ENCODE measurements at regions of chr3 and their contacts with region 1.

Region 1: DNA sequence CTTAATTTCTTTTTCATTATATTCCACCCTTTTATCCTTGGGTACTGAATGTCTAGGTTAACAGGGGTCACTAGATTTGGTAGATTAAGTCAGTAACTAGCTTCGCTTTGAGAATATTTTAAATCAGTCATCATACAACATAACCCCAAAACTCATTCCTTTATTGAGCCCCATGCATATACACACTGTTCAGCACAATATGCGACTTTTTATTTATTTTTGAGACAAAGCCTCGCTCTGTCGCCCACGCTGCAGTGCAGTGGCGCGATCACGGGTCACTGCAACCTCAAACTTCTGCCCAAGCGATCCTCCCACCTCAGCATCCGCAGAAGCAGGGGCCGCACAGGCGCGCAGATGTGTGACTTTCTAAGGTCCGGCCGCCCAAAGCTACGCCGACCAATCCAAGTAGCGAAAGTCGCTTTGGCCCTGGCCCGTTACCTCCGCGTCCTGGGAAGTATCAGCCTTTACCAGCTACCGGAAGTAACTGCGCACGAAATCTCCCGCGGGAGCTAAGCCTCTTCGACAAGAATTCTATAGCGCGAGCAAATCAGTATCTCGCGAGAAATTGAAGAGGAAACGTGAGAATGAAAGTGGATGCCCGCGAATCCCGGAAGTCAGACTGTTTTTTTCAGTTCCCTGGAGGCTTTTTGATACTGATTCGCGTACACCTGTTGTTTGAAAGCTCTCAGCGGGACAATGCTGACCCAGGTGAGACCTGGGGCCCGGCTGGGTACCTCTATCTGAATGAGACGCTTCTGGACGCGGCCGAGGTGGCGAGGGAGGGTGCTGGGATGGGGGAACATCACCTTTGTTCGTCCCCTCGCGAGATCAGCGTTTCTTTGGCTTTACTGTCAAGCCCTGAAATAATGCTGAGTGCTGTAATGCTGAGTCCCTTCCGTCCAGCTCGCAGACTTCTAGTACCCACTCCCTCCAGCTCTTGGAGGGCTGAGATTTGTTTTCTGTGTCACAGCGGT is at the starts of genes DHFR2 and NSUN3:
- DNase-seq: peak; percentile 96
- H3K4me3 ChIP-seq: peak within 1 kb of the TSS; percentile 81 to 92
- H3K27ac ChIP-seq: peak within 1 kb of the TSS; percentile 97 to 98
- H3K4me1 ChIP-seq: peaks cover 20% of the 10 kb centered on the region
- H3K27me3 ChIP-seq: no peaks in the 10 kb centered on the region
- CTCF ChIP-seq: no peak
- POLR2A ChIP-seq: no peak
- total RNA-seq, gene DHFR2: 9.1 to 10.9 TPM
- total RNA-seq, gene NSUN3: 19.1 to 19.6 TPM

Region 2: DNA sequence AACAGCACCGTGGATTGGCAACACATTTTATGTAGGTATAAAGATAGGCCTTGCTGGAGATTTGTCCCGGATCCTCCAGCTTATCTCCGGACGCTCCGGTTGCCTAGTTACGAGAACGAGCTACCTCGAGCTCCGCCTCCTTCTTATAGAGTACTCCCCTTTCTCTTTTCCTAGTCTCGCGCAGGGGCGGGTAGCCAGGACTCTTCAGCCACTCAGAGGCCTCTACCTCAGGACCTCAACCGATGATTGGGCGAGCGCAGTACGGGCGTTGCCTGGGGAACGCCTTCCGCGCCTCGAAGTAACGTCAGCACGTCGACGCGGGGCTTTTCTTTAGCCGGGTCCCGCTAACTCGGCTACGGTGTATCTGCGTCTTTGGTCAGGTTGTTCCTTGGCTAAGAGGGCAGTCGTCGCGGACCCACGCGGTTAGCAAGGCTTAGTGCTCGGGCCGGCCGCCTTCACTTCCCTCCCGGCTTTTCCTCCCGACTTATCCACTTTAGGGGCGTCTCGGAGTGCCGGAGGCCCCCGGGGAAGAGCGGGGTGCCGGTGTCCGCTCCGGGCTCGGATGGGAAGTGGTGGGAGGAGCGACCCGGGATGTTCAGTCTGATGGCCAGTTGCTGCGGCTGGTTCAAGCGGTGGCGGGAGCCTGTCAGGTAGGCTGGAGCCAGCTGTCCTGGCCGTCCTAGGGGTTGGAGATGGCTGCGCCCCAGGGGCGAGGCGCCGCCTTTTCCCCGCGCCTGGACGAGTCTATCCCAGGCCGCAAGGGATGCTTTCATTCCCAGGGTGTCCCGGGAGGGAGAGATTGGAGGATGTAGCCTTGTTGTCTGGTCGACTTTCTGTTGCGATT is 82.7 kb before region 1 on chr3 and contains the start of gene ARL13B:
- intact Hi-C with region 1: loop called (anchors 5 kb)
- DNase-seq: peak; percentile 100
- H3K4me3 ChIP-seq: peak within 1 kb of the TSS; percentile 67 to 95
- H3K27ac ChIP-seq: peak within 1 kb of the TSS; percentile 92 to 94
- H3K4me1 ChIP-seq: peaks cover 7% of the 10 kb centered on the region
- H3K27me3 ChIP-seq: no peaks in the 10 kb centered on the region
- CTCF ChIP-seq: no peak
- POLR2A ChIP-seq: peak; percentile 68
- total RNA-seq, gene ARL13B: 14.9 to 15.4 TPM

Region 3: GRCh38 chr3:94137377-94137776 is 74.7 kb after region 1 on chr3:
- intact Hi-C with region 1: no loop called
- DNase-seq: no peak
- H3K4me3 ChIP-seq: no peak overlapping the region
- H3K27ac ChIP-seq: no peak overlapping the region
- H3K4me1 ChIP-seq: no peaks in the 10 kb centered on the region
- H3K27me3 ChIP-seq: no peaks in the 10 kb centered on the region
- CTCF ChIP-seq: no peak
- POLR2A ChIP-seq: no peak

Measured in testis (tissue), 5 donors.